Endothelial cell of umbilical vein (primary cell): ENCODE measurements at regions of chr1 and their contacts with region 1.

Region 1: DNA sequence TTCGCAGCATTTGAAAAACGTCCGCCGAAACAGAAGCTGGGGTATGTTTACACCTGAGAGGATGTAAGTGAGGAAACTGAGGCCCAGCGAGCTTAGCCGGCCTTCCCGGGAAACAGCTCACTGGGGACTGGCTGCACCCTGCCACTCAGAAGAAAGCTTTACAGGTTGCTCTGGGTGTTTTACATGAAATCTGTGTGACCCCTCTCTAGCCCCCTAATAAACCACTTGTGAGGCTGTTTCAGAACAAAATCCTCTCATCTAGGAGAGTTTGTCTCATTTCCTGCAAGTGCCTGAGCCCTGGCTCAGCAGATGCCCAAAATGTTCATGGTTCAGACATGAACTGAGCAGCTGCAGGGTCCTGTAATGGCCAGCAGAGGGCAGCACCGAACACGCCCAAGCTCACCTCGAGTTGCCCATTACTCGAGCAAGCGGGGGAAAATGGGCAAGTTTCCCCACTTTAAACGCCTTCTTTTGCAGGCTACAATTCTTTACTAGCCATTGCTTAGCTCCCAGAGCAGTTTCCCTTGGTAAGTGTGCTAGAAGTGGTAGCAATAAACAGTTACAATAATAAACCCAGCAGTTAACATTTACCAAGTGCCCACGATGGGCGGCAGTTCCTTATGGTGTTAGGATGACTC is 76.4 kb downstream of the FHAD1 start:
- DNase-seq: peak; percentile 73
- H3K4me3 ChIP-seq: no peak overlapping the region
- H3K27ac ChIP-seq: no peak overlapping the region
- H3K4me1 ChIP-seq: peaks cover 5% of the 10 kb centered on the region
- H3K27me3 ChIP-seq: no peaks in the 10 kb centered on the region
- CTCF ChIP-seq: peak; percentile 97 to 98
- POLR2A ChIP-seq: no peak

Region 2: GRCh38 chr1:15337656-15338402 is 14.4 kb after region 1 on chr1:
- CTCF ChIA-PET with region 1: interaction called, 37 read pairs
- POLR2A ChIA-PET with region 1: no interaction called
- dilution Hi-C with region 1: no loop called
- intact Hi-C with region 1: no loop called
- DNase-seq: peak; percentile 83
- H3K4me3 ChIP-seq: no peak overlapping the region
- H3K27ac ChIP-seq: peak overlapping the region; percentile 89
- H3K4me1 ChIP-seq: peaks cover 44% of the 10 kb centered on the region
- H3K27me3 ChIP-seq: no peaks in the 10 kb centered on the region
- CTCF ChIP-seq: no peak
- POLR2A ChIP-seq: peak; percentile 63

Region 3: GRCh38 chr1:15409388-15410222 is 86.1 kb after region 1 on chr1 and contains the start of gene EFHD2:
- CTCF ChIA-PET with region 1: interaction called, 31 read pairs
- POLR2A ChIA-PET with region 1: interaction called, 4 read pairs
- dilution Hi-C with region 1: loop called (anchors 10 kb)
- intact Hi-C with region 1: loop called (anchors 1 kb)
- DNase-seq: peak; percentile 73
- H3K4me3 ChIP-seq: peak within 1 kb of the TSS; percentile 82 to 90 (median 82)
- H3K27ac ChIP-seq: peak within 1 kb of the TSS; percentile 58
- H3K4me1 ChIP-seq: peaks cover 32% of the 10 kb centered on the region
- H3K27me3 ChIP-seq: no peaks in the 10 kb centered on the region
- CTCF ChIP-seq: no peak
- POLR2A ChIP-seq: peak; percentile 89
- total RNA-seq, gene EFHD2: 65.5 and 73.5 TPM in 2 replicates

Region 4: DNA sequence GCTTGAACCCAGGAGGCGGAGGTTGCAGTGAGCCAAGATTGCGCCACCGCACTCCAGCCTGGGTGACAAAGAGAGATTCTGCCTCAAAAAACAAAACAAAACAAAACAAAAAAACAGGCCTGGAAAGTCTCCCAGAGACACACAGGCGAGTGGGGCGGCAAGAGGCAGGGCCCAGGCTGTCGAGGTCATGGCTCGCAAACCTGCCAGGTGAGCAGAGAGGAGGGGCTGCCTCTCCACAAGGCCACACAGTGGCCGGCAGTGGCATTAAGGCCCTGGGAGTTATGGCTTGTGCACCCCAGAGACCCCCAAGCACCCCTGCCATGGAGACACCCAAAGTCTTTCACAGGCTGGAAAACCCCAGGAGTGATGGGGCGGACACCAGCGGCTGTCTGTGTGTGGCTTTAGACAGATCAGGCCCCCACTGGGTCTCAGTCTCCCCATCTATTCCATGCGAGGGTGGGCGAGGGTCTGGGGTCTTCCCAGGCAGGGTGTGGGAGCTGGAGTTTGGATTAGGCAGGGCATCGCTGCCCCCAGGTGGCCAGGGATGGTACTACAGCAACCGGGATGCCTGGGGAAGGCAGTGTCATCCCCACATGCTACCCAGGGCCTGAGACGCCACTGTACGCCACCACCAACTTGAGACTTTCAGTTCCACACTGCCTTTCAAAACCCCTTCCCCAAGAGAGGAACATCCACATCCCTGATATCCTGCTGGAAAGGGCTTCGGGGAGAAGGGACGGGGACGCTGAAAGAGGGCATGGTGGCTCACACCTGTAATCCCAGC is 107.5 kb after region 1 on chr1:
- CTCF ChIA-PET with region 1: interaction called, 332 read pairs
- POLR2A ChIA-PET with region 1: interaction called, 3 read pairs
- dilution Hi-C with region 1: no loop called
- intact Hi-C with region 1: loop called (anchors 1 kb)
- DNase-seq: peak; percentile 47
- H3K4me3 ChIP-seq: no peak overlapping the region
- H3K27ac ChIP-seq: no peak overlapping the region
- H3K4me1 ChIP-seq: no peaks in the 10 kb centered on the region
- H3K27me3 ChIP-seq: no peaks in the 10 kb centered on the region
- CTCF ChIP-seq: peak; percentile 86 to 90
- POLR2A ChIP-seq: no peak

Region 5: GRCh38 chr1:15501208-15502032 is 177.9 kb after region 1 on chr1:
- CTCF ChIA-PET with region 1: interaction called, 22 read pairs
- POLR2A ChIA-PET with region 1: no interaction called
- dilution Hi-C with region 1: no loop called
- intact Hi-C with region 1: loop called (anchors 1 kb)
- DNase-seq: peak; percentile 55
- H3K4me3 ChIP-seq: no peak overlapping the region
- H3K27ac ChIP-seq: no peak overlapping the region
- H3K4me1 ChIP-seq: no peaks in the 10 kb centered on the region
- H3K27me3 ChIP-seq: no peaks in the 10 kb centered on the region
- CTCF ChIP-seq: peak; percentile 84 to 86
- POLR2A ChIP-seq: no peak

Region 6: GRCh38 chr1:15741183-15741850 is 417.8 kb after region 1 on chr1:
- CTCF ChIA-PET with region 1: no interaction called
- POLR2A ChIA-PET with region 1: no interaction called
- dilution Hi-C with region 1: no loop called
- intact Hi-C with region 1: loop called (anchors 10 kb)
- DNase-seq: peak; percentile 49
- H3K4me3 ChIP-seq: no peak overlapping the region
- H3K27ac ChIP-seq: no peak overlapping the region
- H3K4me1 ChIP-seq: no peaks in the 10 kb centered on the region
- H3K27me3 ChIP-seq: no peaks in the 10 kb centered on the region
- CTCF ChIP-seq: peak; percentile 72 to 80
- POLR2A ChIP-seq: no peak